ENCODE measurements at regions of chr1 and their contacts with region 1.

Region 1: GRCh38 chr1:157090196-157090647 is 9.4 kb downstream of the ETV3L start:
- DNase-seq: peak; percentile 57
- H3K4me3 ChIP-seq: no peak overlapping the region
- H3K27ac ChIP-seq: no peak overlapping the region
- H3K4me1 ChIP-seq: no peaks in the 10 kb centered on the region
- H3K27me3 ChIP-seq: no peaks in the 10 kb centered on the region
- CTCF ChIP-seq: peak; percentile 84 to 90
- POLR2A ChIP-seq: no peak

Region 2: DNA sequence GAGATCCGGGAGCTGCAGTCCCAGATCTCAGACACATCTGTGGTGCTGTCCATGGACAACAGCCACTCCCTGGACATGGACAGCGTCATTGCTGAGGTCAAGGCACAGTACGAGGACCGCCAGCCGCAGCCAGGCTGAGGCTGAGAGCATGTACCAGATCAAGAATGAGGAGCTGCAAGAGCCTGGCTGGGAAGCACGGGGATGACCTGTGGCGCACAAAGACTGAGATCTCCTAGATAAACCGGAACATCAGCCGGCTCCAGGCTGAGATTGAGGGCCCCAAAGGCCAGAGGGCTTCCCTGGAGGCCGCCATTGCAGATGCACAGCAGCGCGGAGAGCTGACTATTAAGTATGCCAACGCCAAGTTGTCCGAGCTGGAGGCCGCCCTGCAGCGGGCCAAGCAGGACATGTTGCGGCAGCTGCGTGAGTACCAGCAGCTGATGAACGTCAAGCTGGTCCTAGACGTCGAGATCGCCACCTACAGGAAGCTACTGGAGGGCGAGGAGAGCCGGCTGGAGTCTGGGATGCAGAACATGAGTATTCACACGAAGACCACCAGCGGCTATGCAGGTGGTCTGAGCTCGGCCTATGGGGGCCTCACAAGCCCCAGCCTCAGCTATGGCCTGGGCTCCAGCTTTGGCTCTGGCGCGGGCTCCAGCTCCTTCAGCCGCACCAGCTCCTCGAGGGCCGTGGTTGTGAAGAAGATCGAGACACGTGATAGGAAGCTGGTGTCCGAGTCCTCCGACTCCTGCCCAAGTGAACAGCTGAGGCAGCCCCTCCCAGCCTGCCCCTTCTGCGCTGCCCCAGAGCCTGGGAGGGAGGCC is 16.1 kb before region 1 on chr1:
- CTCF ChIA-PET with region 1: interaction called, 37 read pairs
- POLR2A ChIA-PET with region 1: no interaction called
- dilution Hi-C with region 1: no loop called
- intact Hi-C with region 1: no loop called
- DNase-seq: peak; percentile 66
- H3K4me3 ChIP-seq: no peak overlapping the region
- H3K27ac ChIP-seq: no peak overlapping the region
- H3K4me1 ChIP-seq: no peaks in the 10 kb centered on the region
- H3K27me3 ChIP-seq: peaks cover 23 to 29% of the 10 kb centered on the region in 2 experiments
- CTCF ChIP-seq: peak; percentile 52 to 77
- POLR2A ChIP-seq: no peak

Region 3: DNA sequence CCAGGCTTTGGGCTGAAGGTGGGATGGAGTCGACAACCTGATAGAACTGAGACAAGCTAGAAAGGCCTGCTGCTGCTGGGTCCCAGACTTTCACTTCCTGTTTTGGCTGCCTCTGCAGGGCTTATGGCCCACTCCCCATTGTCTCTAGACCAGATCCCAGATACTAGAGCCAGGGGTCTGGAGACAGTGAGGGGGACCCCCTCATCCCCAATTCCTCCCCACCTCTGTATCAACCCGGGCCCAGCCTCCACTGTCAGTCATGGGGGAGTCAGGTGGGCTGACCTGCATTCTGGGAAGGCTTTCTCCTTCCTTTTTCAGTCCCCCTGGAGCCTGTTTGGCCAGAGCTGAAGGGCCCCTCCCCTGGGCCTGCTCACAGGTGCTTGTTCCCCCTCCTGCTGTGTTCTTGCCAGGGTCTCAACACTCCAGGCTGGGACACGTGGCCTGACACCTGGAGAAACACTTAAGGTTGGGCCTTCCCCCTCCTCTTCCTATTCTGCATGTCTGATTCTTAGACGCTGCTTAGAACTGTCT is 27.4 kb after region 1 on chr1:
- CTCF ChIA-PET with region 1: interaction called, 29 read pairs
- POLR2A ChIA-PET with region 1: no interaction called
- dilution Hi-C with region 1: no loop called
- intact Hi-C with region 1: no loop called
- DNase-seq: no peak
- H3K4me3 ChIP-seq: no peak overlapping the region
- H3K27ac ChIP-seq: no peak overlapping the region
- H3K4me1 ChIP-seq: no peaks in the 10 kb centered on the region
- H3K27me3 ChIP-seq: peaks cover 0 to 8% of the 10 kb centered on the region in 2 experiments
- CTCF ChIP-seq: no peak
- POLR2A ChIP-seq: no peak

Region 4: GRCh38 chr1:157132641-157133053 is 42.4 kb after region 1 on chr1:
- CTCF ChIA-PET with region 1: interaction called, 96 read pairs
- POLR2A ChIA-PET with region 1: no interaction called
- dilution Hi-C with region 1: no loop called
- intact Hi-C with region 1: no loop called
- DNase-seq: no peak
- H3K4me3 ChIP-seq: no peak overlapping the region
- H3K27ac ChIP-seq: no peak overlapping the region
- H3K4me1 ChIP-seq: peaks cover 13% of the 10 kb centered on the region
- H3K27me3 ChIP-seq: no peaks in the 10 kb centered on the region
- CTCF ChIP-seq: no peak
- POLR2A ChIP-seq: no peak

Region 5: GRCh38 chr1:157156058-157156541 is 65.9 kb after region 1 on chr1:
- CTCF ChIA-PET with region 1: interaction called, 1,121 read pairs
- POLR2A ChIA-PET with region 1: interaction called, 7 read pairs
- dilution Hi-C with region 1: no loop called
- intact Hi-C with region 1: loop called (anchors 1 kb)
- DNase-seq: peak; percentile 60
- H3K4me3 ChIP-seq: no peak overlapping the region
- H3K27ac ChIP-seq: no peak overlapping the region
- H3K4me1 ChIP-seq: peaks cover 23% of the 10 kb centered on the region
- H3K27me3 ChIP-seq: peaks cover 5 to 7% of the 10 kb centered on the region in 2 experiments
- CTCF ChIP-seq: peak; percentile 86 to 93
- POLR2A ChIP-seq: no peak

Measured in endothelial cell of umbilical vein (primary cell).